Dorsolateral prefrontal cortex (tissue), 120 donors: ENCODE measurements at regions of chr17 and their contacts with region 1.

Region 1: DNA sequence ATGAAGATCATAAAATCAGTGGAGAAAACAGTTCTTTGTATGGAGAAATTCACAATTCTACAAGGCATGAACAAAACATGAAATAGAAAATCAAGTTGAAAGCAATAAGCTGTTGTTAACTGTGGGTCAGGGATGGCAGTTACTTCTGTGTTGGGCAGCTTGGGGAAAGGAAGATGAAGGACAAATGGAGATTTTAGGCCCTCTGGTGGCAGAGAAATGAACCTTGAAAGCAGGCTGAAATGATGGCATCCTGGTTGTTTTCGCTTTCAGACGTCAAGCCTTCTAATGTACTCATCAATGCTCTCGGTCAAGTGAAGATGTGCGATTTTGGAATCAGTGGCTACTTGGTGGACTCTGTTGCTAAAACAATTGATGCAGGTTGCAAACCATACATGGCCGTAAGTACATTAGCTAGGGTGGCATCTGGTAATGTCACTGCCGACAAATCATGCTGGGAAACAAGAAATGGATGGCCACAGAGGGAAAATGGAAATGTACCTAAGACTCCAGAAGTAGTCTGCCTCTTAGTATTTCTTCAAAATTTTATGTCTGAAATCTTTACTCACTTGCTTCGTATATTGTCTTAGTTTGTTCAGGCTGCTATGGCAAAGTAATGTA is 108.9 kb downstream of the MAP2K6 start:
- DNase-seq: peak in 2 of 10 donors; percentile 42 to 48
- H3K4me3 ChIP-seq: peak overlapping the region in 21 of 59 donors; percentile 7 to 49 (median 24)
- H3K27ac ChIP-seq: peak overlapping the region in 27 of 59 donors; percentile 0 to 78 (median 36)
- H3K27me3 ChIP-seq: no peaks in the 10 kb centered on the region
- CTCF ChIP-seq: peak; percentile 65 to 92 (median 81)

Region 2: GRCh38 chr17:68771867-68772515 is 751.4 kb before region 1 on chr17:
- intact Hi-C with region 1: loop called in 1 of 2 experiments (anchors 10 kb)
- DNase-seq: peak in 1 of 10 donors; percentile 40
- H3K4me3 ChIP-seq: peak overlapping the region in 49 of 59 donors; percentile 5 to 60 (median 41)
- H3K27ac ChIP-seq: peak overlapping the region in 56 of 59 donors; percentile 16 to 90 (median 76)
- H3K27me3 ChIP-seq: no peaks in the 10 kb centered on the region
- CTCF ChIP-seq: peak; percentile 51 to 87 (median 73)

Region 3: GRCh38 chr17:69246726-69247375 is 276.5 kb before region 1 on chr17:
- intact Hi-C with region 1: loop called in 1 of 2 experiments (anchors 10 kb)
- DNase-seq: no peak
- H3K4me3 ChIP-seq: no peak overlapping the region
- H3K27ac ChIP-seq: peak overlapping the region in 1 of 59 donors; percentile 7
- H3K27me3 ChIP-seq: no peaks in the 10 kb centered on the region
- CTCF ChIP-seq: peak; percentile 59 to 94 (median 79)

Region 4: DNA sequence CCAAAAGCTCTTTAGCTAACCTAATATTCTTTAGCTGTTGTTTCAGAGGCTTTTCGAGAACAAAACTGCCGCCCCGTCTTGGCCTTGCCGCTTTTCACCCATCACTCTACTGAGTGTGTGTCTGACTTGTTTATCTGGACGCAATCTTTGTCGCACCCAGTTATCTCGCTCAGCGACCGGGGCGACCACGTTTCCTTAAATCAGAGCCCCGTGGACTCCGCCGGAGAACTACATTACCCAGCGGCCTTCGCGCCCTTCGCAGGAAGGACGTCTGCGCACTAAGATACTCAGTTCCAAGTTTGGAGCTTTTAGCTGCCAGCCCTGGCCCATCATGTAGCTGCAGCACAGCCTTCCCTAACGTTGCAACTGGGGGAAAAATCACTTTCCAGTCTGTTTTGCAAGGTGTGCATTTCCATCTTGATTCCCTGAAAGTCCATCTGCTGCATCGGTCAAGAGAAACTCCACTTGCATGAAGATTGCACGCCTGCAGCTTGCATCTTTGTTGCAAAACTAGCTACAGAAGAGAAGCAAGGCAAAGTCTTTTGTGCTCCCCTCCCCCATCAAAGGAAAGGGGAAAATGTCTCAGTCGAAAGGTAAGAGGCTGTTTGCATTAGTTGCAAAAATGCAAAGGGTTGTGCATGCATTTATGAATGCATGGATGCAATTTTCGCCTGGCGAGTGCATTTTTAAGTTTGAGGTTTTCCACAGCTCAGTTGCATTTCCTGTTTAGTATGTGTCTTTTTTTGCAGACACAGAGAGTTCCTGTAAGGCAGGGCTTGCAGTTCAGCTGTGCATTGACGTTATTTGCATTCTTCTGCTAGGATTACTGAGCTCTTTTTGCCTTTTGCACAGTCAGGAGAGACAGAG is 108.7 kb before region 1 on chr17 and contains the start of gene MAP2K6:
- intact Hi-C with region 1: loop called in 1 of 2 experiments (anchors 5 kb)
- DNase-seq: peak; percentile 79 to 91 (median 88)
- H3K4me3 ChIP-seq: peak within 1 kb of the TSS; percentile 48 to 86 (median 72)
- H3K27ac ChIP-seq: peak within 1 kb of the TSS in 37 of 59 donors; percentile 2 to 78 (median 55)
- H3K27me3 ChIP-seq: peaks cover 0 to 2% (median 0%) of the 10 kb centered on the region in 45 donors
- CTCF ChIP-seq: peak in 14 of 56 donors; percentile 6 to 39 (median 14)
- total RNA-seq, gene MAP2K6: 9.1 to 26.7 (median 17.7) TPM

Region 5: DNA sequence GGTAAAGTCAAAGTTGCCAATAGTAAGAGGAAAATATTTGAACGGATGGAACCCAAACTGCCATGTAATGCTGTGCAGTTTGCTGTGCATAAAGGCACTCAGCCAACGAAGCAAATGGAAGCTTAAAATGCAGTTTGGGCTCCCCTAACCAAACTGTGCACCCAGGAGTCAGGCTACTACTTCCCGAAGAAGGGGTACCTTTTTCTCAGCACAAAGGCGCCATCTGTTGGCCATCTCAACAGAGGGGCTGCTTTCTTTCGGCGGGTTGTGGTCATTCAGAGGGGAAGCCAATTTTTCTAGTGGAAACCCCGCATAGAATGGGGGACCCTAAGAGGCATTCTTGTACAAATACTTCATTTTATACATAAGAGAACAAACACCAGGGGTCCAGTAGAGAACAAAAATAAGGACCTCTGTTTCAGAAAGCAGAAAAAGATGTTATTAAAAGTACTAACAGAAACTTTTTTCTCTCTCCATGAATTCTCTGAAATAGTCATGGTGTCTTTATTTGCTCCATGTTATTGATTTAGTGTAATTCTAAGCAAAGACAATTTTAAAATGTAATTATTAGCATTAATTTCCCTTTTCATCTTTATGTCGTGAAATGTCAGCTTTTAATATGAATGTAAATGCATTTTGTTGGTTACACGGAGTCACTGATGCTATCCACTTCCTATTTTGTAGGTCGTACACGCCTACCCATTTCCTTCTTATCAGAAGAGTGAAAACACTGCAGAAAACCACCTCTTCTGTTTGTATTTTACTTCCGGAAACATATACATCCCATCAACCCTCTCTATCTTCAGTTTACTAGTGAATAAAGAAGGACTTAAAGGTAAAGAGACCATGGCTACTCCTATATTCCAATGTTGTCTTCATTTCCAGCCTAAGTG is 1099.3 kb after region 1 on chr17:
- intact Hi-C with region 1: loop called in 1 of 2 experiments (anchors 2 kb)
- DNase-seq: peak; percentile 14 to 87 (median 76)
- H3K4me3 ChIP-seq: peak overlapping the region in 36 of 59 donors; percentile 1 to 53 (median 24)
- H3K27ac ChIP-seq: peak overlapping the region; percentile 2 to 93 (median 84)
- H3K27me3 ChIP-seq: no peaks in the 10 kb centered on the region
- CTCF ChIP-seq: peak; percentile 43 to 95 (median 79)